ENCODE measurements at regions of chr19 and their contacts with region 1.

Region 1: DNA sequence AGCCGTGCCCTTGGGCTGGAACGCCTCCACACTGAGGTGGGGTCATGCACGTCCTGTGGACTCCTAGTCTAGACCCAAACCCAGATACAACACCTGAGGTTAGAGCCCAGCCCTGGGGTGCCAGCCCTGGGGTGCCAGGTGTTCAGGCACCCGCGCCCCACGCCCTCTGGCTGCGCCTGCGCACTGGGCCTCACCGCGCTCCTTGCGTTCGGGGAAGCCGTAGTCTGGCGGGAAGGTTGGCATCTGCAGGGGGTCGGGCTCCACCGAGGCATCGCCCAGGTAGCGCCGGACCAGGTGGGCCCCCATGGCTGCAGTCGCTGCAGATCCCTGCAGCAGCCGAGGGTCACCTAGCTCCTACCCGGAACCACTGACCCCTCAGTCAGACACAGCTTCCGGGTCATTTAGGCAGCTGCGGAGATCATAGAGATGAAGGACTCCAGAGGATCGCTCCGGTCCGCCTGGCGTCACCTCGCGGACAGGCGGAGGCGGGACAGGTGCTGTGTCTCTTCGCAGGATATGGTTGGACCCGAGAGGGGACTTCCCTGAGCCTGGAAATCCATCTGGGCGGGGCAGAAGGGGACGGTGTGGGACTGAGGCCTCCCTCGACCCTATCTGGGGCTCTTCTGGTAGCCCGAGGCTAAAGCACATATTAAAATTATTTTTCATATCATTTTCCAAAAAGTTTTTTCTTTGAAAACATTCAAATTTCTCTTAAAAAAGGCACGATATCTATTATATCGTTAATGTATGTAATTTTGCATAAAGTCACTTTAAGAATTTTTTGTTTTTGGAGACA is at the start of gene NDUFB7:
- DNase-seq: peak; percentile 90
- ATAC-seq: peak; percentile 96
- H3K4me3 ChIP-seq: peak within 1 kb of the TSS; percentile 99
- H3K27ac ChIP-seq: peak within 1 kb of the TSS; percentile 93
- H3K4me1 ChIP-seq: peaks cover 12% of the 10 kb centered on the region
- H3K27me3 ChIP-seq: no peaks in the 10 kb centered on the region
- CTCF ChIP-seq: peak; percentile 93 to 99 (median 95)
- EP300 ChIP-seq: no peak
- POLR2A ChIP-seq: peak; percentile 95
- RAD21 ChIP-seq: no peak
- polyA plus RNA-seq, gene NDUFB7: 14.6 to 72.4 TPM

Region 2: DNA sequence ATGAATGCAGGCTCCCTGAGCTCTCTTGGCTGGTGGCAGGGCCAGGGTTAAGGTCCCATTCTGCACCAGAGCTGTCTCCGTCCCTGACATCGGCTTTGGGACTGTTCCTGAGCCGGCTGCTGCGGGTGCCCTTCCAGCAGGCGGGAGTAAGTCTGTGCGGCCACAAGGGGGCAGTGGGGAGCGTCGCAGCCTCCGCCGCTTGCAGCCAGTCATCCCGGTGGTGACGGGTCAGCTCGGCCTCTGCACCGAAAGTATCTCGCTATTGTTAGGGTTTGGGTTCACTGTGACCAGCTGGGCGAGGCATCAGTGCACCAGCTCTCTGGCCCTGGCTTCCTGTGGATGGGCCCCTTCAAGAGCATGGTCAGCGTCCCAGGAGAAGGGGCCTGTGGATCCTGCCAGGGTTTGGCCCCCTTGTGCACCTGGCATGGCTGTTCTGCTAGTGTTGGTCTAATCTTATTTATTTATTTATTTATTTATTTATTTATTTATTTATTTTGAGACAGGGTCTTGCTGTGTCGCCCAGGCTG is 15.2 kb before region 1 on chr19:
- CTCF ChIA-PET with region 1: interaction called, 43 read pairs
- POLR2A ChIA-PET with region 1: interaction called, 11 read pairs
- RAD21 ChIA-PET with region 1: interaction called, 4 read pairs
- SMC1A ChIA-PET with region 1: interaction called, 6 read pairs
- in situ Hi-C with region 1: no loop called
- intact Hi-C with region 1: no loop called
- DNase-seq: no peak
- ATAC-seq: peak; percentile 98
- H3K4me3 ChIP-seq: no peak overlapping the region
- H3K27ac ChIP-seq: no peak overlapping the region
- H3K4me1 ChIP-seq: peaks cover 9% of the 10 kb centered on the region
- H3K27me3 ChIP-seq: no peaks in the 10 kb centered on the region
- CTCF ChIP-seq: peak; percentile 90 to 98 (median 97)
- EP300 ChIP-seq: no peak
- POLR2A ChIP-seq: no peak
- RAD21 ChIP-seq: peak; percentile 48

Region 3: GRCh38 chr19:14603990-14604387 is 32.1 kb after region 1 on chr19:
- CTCF ChIA-PET with region 1: interaction called, 26 read pairs
- POLR2A ChIA-PET with region 1: interaction called, 11 read pairs
- RAD21 ChIA-PET with region 1: interaction called, 22 read pairs
- SMC1A ChIA-PET with region 1: interaction called, 23 read pairs
- in situ Hi-C with region 1: no loop called
- intact Hi-C with region 1: loop called (anchors 5 kb)
- DNase-seq: peak; percentile 84
- ATAC-seq: peak; percentile 97
- H3K4me3 ChIP-seq: 0 out of 2 replicates have a peak overlapping the region, but pooled peaks have one; percentile 17
- H3K27ac ChIP-seq: peak overlapping the region; percentile 89
- H3K4me1 ChIP-seq: peaks cover 36% of the 10 kb centered on the region
- H3K27me3 ChIP-seq: no peaks in the 10 kb centered on the region
- CTCF ChIP-seq: no peak
- EP300 ChIP-seq: peak in 1 of 2 experiments; percentile 53; a peak in 1 of 4 replicates
- POLR2A ChIP-seq: peak; percentile 38; the same call in 1 of the 2 replicates
- RAD21 ChIP-seq: no peak

Region 4: DNA sequence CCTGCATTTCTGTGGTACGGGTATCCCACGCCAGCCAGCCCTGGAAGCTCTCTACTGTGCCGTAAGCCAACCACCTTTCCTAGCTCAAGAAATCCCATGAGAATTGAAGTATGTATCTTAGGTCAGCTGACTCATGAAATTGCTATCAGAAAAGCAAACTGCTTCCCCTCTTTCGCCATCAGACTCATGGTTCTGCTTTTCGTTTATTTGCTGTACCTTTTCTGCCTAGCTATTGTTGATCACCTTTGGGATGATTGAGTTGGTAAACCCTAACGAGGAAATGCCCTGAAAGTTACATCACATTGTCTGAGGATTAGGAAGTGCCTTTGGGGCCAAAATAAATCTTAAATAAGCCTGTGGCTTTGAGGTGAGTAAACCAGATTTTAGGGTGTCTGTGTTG is 102.9 kb after region 1 on chr19 and contains the start of gene ADGRE3:
- CTCF ChIA-PET with region 1: interaction called, 25 read pairs
- POLR2A ChIA-PET with region 1: no interaction called
- RAD21 ChIA-PET with region 1: interaction called, 11 read pairs
- SMC1A ChIA-PET with region 1: interaction called, 13 read pairs
- in situ Hi-C with region 1: no loop called
- intact Hi-C with region 1: no loop called
- DNase-seq: no peak
- ATAC-seq: peak; percentile 46; the same call in 2 of the 3 replicates
- H3K4me3 ChIP-seq: no peak within 1 kb of the TSS
- H3K27ac ChIP-seq: no peak within 1 kb of the TSS
- H3K4me1 ChIP-seq: no peaks in the 10 kb centered on the region; the same call in 1 of the 2 replicates
- H3K27me3 ChIP-seq: no peaks in the 10 kb centered on the region
- CTCF ChIP-seq: no peak
- EP300 ChIP-seq: no peak
- POLR2A ChIP-seq: no peak
- RAD21 ChIP-seq: no peak
- polyA plus RNA-seq, gene ADGRE3: 0.04 to 0.05 TPM

Region 5: DNA sequence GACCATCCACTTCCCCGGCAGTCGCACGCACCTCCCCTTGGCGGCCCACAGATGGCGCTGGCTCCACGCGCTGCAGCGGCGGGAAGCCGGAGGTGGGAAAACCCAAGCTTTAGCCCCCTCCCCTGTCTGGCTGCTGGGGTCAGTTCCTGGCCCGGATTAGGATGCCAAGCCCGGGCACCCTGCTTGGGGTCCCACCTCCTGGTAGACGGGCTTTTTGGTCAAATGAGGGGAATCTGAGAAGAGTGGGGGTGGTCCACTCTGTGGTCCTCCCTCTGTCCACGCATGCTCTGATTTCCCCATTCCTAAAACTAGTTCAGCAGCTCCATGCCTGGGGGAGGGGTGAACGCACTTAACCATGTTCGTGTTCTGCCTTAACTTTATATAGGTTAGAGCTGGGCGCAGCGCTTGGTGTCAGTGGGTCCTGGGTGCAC is 214.5 kb after region 1 on chr19:
- CTCF ChIA-PET with region 1: interaction called, 4 read pairs
- POLR2A ChIA-PET with region 1: no interaction called
- RAD21 ChIA-PET with region 1: interaction called, 8 read pairs
- SMC1A ChIA-PET with region 1: no interaction called
- in situ Hi-C with region 1: no loop called
- intact Hi-C with region 1: loop called (anchors 10 kb)
- DNase-seq: no peak
- ATAC-seq: peak; percentile 54
- H3K4me3 ChIP-seq: no peak overlapping the region
- H3K27ac ChIP-seq: no peak overlapping the region
- H3K4me1 ChIP-seq: peaks cover 24% of the 10 kb centered on the region; the same call in 1 of the 2 replicates
- H3K27me3 ChIP-seq: no peaks in the 10 kb centered on the region
- CTCF ChIP-seq: peak; percentile 56 to 88 (median 81)
- EP300 ChIP-seq: no peak
- POLR2A ChIP-seq: no peak
- RAD21 ChIP-seq: peak; percentile 69

Region 6: GRCh38 chr19:14890643-14891379 is 318.9 kb after region 1 on chr19:
- CTCF ChIA-PET with region 1: interaction called, 19 read pairs
- POLR2A ChIA-PET with region 1: no interaction called
- RAD21 ChIA-PET with region 1: no interaction called
- SMC1A ChIA-PET with region 1: interaction called, 4 read pairs
- in situ Hi-C with region 1: loop called (anchors 5 kb)
- intact Hi-C with region 1: loop called (anchors 5 kb)
- DNase-seq: no peak
- ATAC-seq: no peak
- H3K4me3 ChIP-seq: no peak overlapping the region
- H3K27ac ChIP-seq: no peak overlapping the region
- H3K4me1 ChIP-seq: no peaks in the 10 kb centered on the region
- H3K27me3 ChIP-seq: no peaks in the 10 kb centered on the region; a peak in 1 of 4 replicates
- CTCF ChIP-seq: no peak
- EP300 ChIP-seq: no peak
- POLR2A ChIP-seq: no peak
- RAD21 ChIP-seq: no peak

Region 7: GRCh38 chr19:14906711-14907110 is 334.8 kb after region 1 on chr19:
- CTCF ChIA-PET with region 1: no interaction called
- POLR2A ChIA-PET with region 1: no interaction called
- RAD21 ChIA-PET with region 1: no interaction called
- SMC1A ChIA-PET with region 1: no interaction called
- in situ Hi-C with region 1: no loop called
- intact Hi-C with region 1: no loop called
- DNase-seq: no peak
- ATAC-seq: no peak
- H3K4me3 ChIP-seq: no peak overlapping the region
- H3K27ac ChIP-seq: no peak overlapping the region
- H3K4me1 ChIP-seq: no peaks in the 10 kb centered on the region
- H3K27me3 ChIP-seq: no peaks in the 10 kb centered on the region
- CTCF ChIP-seq: no peak
- EP300 ChIP-seq: no peak
- POLR2A ChIP-seq: no peak
- RAD21 ChIP-seq: no peak

Measured in GM12878 (cell line).